Breast epithelium (tissue), 4 donors: ENCODE measurements at regions of chr2 and their contacts with region 1.

Region 1: DNA sequence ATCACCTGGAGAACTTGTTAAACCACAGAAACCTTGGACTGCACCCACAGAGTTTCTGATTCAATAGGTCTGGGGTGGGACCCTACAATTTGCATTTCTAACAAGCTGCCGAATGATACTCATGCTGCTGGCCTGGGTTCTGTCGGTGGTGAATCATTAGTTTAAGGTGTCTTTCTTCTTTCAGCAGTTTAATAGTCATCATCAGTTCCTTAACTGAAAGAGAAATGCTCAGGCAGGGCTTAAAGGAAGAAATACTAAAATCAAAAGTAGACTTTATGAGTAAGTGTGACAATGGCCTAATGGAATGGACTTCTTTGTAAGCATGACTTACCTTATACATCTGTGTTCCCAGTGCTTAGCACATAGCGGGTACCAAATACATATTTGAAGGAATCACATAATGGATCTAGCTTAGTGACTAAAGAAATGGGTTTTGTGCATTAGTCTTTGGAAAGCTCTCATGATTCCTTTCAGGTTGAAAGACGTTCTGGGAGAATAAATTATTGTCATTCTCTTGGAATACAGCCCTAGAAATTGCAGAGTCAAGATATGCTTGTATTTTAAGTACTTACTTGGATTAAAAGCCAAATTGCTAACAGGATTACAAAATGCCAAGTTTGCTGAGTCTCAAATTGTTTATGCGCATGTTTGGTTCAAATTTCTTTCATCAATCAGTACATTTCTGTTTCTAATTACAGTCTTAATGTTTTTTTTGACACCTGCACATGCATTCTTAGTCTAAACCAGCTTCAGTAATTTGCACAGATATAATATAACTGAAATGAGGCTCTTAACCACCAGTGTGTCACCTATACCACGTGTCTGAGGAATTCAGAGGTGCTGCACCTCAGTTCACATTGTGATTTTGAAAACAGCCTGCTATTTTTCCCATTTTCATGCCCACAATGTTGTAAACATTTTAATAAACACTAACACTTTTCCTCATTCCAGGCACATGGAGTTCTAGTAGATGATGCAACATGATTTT is 220.3 kb upstream of the NRP2 start:
- DNase-seq: no peak
- H3K4me3 ChIP-seq: no peak overlapping the region
- H3K27ac ChIP-seq: no peak overlapping the region
- H3K4me1 ChIP-seq: no peaks in the 10 kb centered on the region
- H3K27me3 ChIP-seq: no peaks in the 10 kb centered on the region
- CTCF ChIP-seq: no peak
- POLR2A ChIP-seq: no peak

Region 2: GRCh38 chr2:205198140-205198525 is 263.8 kb before region 1 on chr2:
- intact Hi-C with region 1: no loop called
- DNase-seq: no peak
- H3K4me3 ChIP-seq: no peak overlapping the region
- H3K27ac ChIP-seq: no peak overlapping the region
- H3K4me1 ChIP-seq: no peaks in the 10 kb centered on the region
- H3K27me3 ChIP-seq: no peaks in the 10 kb centered on the region
- CTCF ChIP-seq: no peak
- POLR2A ChIP-seq: no peak

Region 3: DNA sequence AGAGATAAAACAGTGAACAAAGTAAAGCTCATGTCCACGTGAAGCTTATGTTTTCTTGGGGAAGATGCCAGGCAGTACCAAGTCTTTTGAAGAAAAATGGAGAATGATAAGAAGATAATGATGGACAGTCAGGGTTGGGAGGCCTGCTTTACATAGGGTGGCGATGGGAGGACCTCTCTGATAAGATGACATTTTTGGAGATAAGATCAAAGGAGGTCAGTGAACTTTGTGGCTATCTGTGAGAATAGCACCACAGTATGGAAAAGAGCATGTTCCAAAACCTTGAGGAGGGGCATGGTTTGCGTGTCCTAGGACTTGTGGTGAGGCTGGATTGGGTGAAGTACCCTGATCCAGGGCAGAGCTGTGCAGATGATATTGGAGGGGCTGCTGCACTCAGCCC is 241.4 kb before region 1 on chr2:
- intact Hi-C with region 1: loop called (anchors 5 kb)
- DNase-seq: no peak
- H3K4me3 ChIP-seq: no peak overlapping the region
- H3K27ac ChIP-seq: no peak overlapping the region
- H3K4me1 ChIP-seq: no peaks in the 10 kb centered on the region
- H3K27me3 ChIP-seq: no peaks in the 10 kb centered on the region
- CTCF ChIP-seq: no peak
- POLR2A ChIP-seq: no peak

Region 4: DNA sequence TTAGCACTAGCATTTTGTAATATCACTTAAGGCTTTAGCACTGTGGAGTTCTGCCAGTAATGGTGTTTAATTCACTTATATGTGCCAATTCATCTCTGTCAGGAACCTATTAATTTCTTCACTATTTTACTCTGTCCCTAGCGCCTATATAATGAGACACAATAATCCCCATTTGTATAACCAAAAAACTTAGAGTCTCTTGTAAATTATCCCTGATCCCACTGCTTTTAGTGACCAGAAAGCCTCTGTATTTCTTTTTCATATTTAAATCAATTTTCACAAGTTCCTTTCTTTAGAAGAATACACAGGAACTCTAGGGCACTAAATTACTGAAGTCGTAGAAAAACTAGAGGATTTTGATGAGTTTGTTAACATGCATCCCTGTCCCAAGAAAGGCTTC is 22.4 kb before region 1 on chr2:
- intact Hi-C with region 1: no loop called
- DNase-seq: no peak
- H3K4me3 ChIP-seq: no peak overlapping the region
- H3K27ac ChIP-seq: no peak overlapping the region
- H3K4me1 ChIP-seq: no peaks in the 10 kb centered on the region
- H3K27me3 ChIP-seq: no peaks in the 10 kb centered on the region
- CTCF ChIP-seq: no peak
- POLR2A ChIP-seq: no peak